PC-9 (cell line): ENCODE measurements at regions of chr6 and their contacts with region 1.

Region 1: DNA sequence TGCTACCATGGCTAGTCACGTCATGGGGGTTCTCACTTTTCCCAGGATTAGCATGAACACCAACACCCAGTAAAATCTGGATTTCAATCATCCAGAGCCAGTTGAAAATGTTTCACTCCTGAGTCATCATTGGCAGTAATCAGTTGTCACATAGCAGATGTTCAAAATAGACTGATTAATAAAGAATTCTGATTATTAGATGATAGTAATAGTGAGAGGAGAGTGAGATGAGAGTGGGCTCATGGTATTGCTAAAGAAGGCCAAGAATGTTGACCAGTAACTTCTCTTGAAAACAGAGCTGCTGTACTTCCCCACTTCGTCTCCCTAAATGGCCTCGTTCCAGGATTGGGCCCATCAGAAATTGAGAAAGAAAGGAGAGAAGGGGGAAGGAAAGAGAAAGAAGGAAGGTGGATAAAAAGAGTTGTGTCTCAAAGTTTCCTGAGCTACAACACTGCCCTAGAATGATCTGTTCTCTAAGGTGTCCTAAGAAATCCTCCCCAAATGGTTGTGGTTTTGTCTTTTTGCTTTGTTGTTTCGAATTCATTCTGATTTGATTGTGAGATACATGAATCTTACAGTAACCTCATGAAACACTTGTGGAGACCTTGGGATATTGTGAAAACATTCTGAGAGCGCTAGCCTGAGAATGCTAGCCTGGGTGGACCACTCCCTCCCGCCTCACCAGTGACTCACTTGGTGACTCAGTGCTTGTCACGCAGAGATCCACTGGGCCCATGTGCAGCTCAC is 502.2 kb upstream of the JARID2 start:
- DNase-seq: peak; percentile 94 to 96
- H3K4me3 ChIP-seq: peak overlapping the region; percentile 32; the same call in 1 of the 2 replicates
- H3K27ac ChIP-seq: peak overlapping the region; percentile 100
- H3K4me1 ChIP-seq: peaks cover 37% of the 10 kb centered on the region
- H3K27me3 ChIP-seq: no peaks in the 10 kb centered on the region
- CTCF ChIP-seq: no peak

Region 2: GRCh38 chr6:14693301-14694192 is 50.1 kb before region 1 on chr6:
- CTCF ChIA-PET with region 1: no interaction called
- POLR2A ChIA-PET with region 1: no interaction called
- intact Hi-C with region 1: no loop called
- DNase-seq: no peak
- H3K4me3 ChIP-seq: no peak overlapping the region
- H3K27ac ChIP-seq: no peak overlapping the region
- H3K4me1 ChIP-seq: no peaks in the 10 kb centered on the region
- H3K27me3 ChIP-seq: no peaks in the 10 kb centered on the region
- CTCF ChIP-seq: no peak

Region 3: GRCh38 chr6:14711056-14711703 is 32.5 kb before region 1 on chr6:
- CTCF ChIA-PET with region 1: interaction called, 3 read pairs
- POLR2A ChIA-PET with region 1: no interaction called
- intact Hi-C with region 1: loop called (anchors 1 kb)
- DNase-seq: peak; percentile 72 to 82
- H3K4me3 ChIP-seq: no peak overlapping the region
- H3K27ac ChIP-seq: peak overlapping the region; percentile 91
- H3K4me1 ChIP-seq: peaks cover 50% of the 10 kb centered on the region
- H3K27me3 ChIP-seq: no peaks in the 10 kb centered on the region
- CTCF ChIP-seq: peak; percentile 66

Region 4: DNA sequence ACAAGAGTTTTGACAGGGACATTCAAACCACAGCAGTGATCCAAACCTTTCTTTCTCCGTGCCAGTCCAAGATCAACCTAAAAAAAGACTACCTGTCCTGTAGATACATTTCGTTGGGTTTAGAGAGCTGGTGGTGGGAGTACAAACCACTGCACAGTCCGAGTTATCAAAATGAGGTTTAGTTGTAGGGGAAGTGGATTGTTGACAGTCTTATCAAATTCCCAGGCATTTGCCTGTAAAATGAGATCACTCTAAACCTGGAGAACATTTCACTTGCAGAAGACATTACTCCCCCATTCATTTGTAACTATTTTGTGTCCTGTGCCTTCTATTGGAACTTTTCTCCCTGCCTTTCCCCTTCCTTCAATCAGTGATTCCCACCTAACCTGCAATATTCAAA is 32.7 kb after region 1 on chr6:
- CTCF ChIA-PET with region 1: no interaction called
- POLR2A ChIA-PET with region 1: interaction called, 4 read pairs
- intact Hi-C with region 1: loop called (anchors 2 kb)
- DNase-seq: peak in 1 of 2 experiments; percentile 9
- H3K4me3 ChIP-seq: no peak overlapping the region
- H3K27ac ChIP-seq: no peak overlapping the region
- H3K4me1 ChIP-seq: 0 out of 2 replicates have a peak, but pooled peaks cover 3% of the 10 kb centered on the region
- H3K27me3 ChIP-seq: no peaks in the 10 kb centered on the region
- CTCF ChIP-seq: no peak

Region 5: DNA sequence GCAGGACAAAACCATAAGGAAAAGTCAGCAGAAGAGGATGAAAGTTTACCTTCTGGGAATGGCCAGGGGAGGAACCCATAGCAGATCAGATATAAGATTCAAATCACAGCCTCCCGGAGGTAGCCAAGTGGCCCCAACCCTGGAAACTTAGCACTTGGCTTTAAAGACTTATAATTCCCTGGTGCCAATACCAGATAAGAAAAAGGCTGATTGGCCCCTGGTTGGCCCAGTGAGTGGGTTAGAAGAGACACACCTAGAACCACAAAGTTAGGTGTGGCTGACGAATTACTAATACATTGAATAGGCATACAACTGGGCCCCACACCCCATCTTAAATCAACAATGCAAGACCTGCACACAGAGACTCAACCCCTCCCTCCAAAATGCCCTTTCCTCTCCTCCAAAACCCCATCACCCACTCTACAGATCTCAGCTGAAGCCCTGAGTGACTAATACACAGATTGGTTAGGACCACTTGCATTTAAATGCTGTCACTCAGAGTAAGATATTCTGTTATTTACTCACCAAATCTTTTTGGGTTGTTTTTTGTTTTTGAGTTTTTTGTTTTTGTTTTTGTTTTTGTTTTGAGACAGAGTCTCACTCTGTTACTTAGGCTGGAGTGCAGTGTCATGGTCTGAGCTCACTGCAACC is 186.8 kb after region 1 on chr6:
- CTCF ChIA-PET with region 1: interaction called, 4 read pairs
- POLR2A ChIA-PET with region 1: no interaction called
- intact Hi-C with region 1: loop called (anchors 1 kb)
- DNase-seq: peak; percentile 64 to 81
- H3K4me3 ChIP-seq: no peak overlapping the region
- H3K27ac ChIP-seq: peak overlapping the region; percentile 53
- H3K4me1 ChIP-seq: peaks cover 20% of the 10 kb centered on the region
- H3K27me3 ChIP-seq: no peaks in the 10 kb centered on the region
- CTCF ChIP-seq: no peak

Region 6: GRCh38 chr6:15062516-15063252 is 319.0 kb after region 1 on chr6:
- CTCF ChIA-PET with region 1: no interaction called
- POLR2A ChIA-PET with region 1: no interaction called
- intact Hi-C with region 1: loop called (anchors 1 kb)
- DNase-seq: peak in 1 of 2 experiments; percentile 86
- H3K4me3 ChIP-seq: no peak overlapping the region
- H3K27ac ChIP-seq: no peak overlapping the region
- H3K4me1 ChIP-seq: peaks cover 7% of the 10 kb centered on the region; the same call in 1 of the 2 replicates
- H3K27me3 ChIP-seq: no peaks in the 10 kb centered on the region
- CTCF ChIP-seq: no peak

Region 7: DNA sequence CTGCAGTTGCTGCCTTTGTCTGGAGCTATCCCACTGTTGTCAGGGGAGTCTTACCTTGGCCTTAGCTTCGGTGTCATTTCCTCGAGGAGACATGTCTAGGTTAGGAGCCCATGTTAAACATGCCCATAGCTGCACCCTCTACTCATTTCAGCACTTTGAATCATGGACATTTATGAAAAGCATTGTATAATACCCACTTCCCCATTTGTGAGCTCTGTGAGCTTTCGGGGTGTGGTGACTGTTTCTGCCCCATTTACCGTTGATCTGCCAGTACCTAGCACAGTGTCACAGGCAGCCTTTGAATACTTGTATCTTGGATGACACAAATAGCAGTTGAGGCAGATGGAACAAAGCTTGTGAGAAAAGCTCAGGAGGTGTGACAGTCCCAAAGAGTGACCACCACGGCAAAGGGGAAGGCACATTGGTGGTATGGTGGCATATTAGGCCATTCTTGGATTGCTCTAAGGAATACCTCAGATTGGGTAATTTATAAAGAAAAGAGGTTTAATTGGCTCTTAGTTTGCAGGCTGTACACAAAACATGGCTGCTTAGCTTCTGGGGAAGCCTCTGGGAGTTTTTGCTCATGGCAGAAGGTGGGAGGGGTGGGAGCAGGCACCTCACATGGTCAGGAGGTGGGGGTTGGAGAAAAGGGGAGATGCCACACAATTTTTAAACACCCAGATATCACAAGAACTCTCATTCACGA is 544.2 kb after region 1 on chr6:
- CTCF ChIA-PET with region 1: no interaction called
- POLR2A ChIA-PET with region 1: interaction called, 11 read pairs
- intact Hi-C with region 1: no loop called
- DNase-seq: no peak
- H3K4me3 ChIP-seq: no peak overlapping the region
- H3K27ac ChIP-seq: no peak overlapping the region
- H3K4me1 ChIP-seq: peaks cover 43% of the 10 kb centered on the region
- H3K27me3 ChIP-seq: no peaks in the 10 kb centered on the region
- CTCF ChIP-seq: no peak

Region 8: DNA sequence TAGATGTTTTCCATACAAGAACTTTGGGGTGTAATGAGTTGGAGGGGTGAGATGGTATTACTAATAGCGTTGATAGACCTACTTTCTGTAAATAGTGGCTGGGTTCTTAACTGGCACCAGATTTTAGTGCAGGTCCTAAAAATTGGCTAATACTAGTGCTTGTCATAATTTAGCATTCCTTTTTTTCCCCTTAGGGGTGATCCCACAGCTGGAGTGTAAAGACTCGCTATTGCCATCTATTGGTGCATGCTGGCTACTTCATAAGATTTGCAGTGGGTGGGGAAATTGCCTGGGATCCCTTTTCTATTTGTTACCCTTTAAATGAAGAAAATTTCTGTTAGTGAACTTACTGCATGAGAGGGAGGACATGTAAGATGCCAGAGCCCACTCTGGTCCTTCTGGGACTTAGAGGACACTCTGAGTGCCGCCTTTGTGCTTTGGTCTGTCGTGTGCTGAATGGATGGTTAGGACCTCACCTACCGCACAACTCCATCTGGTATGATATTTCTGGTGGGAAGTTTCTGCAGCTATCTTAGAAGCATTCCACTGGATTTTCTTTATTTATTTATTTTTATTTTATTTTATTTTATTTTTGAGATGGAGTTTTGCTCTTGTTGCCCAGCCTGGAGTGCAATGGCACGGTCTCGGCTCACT is 697.7 kb after region 1 on chr6:
- CTCF ChIA-PET with region 1: no interaction called
- POLR2A ChIA-PET with region 1: no interaction called
- intact Hi-C with region 1: loop called (anchors 10 kb)
- DNase-seq: peak; percentile 58 to 69
- H3K4me3 ChIP-seq: no peak overlapping the region
- H3K27ac ChIP-seq: no peak overlapping the region
- H3K4me1 ChIP-seq: peaks cover 46% of the 10 kb centered on the region
- H3K27me3 ChIP-seq: no peaks in the 10 kb centered on the region
- CTCF ChIP-seq: peak; percentile 81